Posterior cingulate gyrus (tissue), 11 donors: ENCODE measurements at regions of chr5 and their contacts with region 1.

Region 1: GRCh38 chr5:170225326-170226128 is 7.3 kb upstream of the C5orf58 start:
- DNase-seq: peak; percentile 55 to 95 (median 84)

Region 2: DNA sequence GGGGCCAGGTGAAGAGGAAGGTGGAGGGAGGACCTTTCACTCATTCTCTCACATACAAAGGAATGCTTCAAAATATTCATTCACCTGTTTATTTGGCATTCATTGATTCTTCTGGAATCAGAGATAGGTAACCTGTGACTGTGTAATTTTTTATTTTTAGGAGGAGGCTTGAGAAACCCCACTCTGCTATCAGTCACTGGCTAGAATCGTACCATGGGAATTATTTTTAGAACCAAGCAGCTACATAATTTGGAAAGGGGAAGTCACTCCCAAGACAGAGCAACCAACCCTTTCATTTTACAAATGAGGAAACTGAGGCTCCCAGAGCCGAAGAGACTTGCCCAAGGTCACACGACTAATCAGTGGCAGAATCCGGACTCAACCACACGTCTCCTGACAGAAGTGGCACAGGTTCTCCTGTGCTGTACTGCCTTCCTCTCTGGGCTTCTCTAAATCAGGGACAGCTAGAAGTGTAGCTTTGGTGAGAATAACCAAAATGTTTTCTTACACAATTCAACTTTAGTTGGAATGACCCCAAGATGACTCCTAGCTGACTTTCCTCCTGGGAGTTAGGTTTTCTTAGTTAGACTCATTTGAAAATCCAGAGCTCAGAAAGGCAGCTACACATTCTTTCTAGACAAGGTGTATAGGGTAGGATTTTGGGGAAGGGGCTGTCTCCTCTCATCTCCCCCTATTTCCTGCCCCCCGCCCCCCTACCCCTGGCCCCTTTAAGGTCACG is 1382.1 kb before region 1 on chr5:
- intact Hi-C with region 1: no loop called
- DNase-seq: peak in 1 of 10 donors; percentile 8

Region 3: DNA sequence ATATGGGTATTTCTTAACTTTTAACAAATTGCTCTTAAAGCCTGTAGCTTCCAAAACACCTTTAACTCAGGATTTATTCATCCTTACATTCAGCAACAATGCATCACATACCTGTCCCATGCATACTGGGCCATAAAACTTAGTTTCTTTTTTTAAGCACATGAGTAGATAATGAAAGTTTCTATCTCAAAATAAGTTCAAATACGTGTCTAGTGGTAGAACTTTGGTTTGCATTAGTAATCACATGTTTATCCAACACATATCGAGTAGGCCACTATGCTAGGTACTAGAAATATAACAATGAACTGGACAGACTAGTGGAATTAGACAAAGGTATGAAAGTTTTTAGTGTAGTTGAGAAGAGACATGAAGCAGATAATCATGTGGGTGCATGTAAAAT is 488.9 kb before region 1 on chr5:
- intact Hi-C with region 1: no loop called
- DNase-seq: no peak

Region 4: DNA sequence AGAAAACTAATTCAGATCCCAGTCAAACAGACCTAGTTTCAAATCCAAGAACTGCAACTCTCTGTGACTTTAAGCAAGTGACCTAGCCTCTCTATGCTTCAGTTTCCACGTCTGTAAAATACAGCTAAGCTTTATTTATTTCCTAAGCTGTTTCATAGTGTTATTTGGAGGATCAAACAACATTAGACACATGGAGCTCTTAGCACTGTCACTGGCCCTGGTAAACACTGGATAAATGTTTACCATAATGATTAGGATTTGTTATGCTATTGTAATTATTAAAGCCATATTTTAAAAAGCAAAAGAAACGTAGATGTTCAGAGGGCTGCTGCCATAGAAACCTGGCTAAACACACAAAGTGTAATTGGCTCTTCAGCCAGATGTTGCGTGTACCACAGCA is 19.3 kb before region 1 on chr5:
- intact Hi-C with region 1: no loop called
- DNase-seq: no peak

Region 5: GRCh38 chr5:170348137-170348633 is 122.7 kb after region 1 on chr5:
- intact Hi-C with region 1: loop called (anchors 2 kb)
- DNase-seq: no peak

Region 6: DNA sequence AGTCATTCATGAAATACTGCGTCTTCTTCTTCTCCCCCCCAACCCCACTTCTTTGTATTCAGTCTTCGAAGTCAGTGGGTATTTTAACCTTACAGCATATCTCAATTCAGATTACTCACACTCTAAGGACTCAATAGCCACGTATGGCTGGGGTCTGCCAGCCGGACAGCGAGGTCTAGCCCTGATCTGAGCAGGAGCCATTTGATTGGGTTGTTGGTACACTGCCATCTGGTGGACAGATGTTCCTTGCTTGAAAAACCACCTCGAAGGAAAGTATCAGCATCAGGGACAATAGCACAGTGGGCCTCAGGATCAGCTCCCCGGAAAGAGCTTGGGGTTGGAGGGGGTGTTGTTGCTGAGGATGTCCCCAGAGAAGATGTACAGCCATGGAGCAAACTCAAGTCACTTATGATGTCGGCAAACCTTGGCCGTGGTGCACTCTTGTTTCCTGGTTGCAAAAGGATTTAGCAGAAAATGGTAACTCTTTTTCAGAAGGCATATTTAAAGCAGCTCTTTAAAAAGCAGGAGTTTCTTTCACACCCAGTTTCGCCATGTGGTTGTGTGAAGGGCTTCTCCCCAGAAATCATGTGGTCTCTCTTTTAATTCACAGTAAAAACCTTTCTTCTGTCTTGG is 195.4 kb after region 1 on chr5:
- intact Hi-C with region 1: loop called (anchors 1 kb)
- DNase-seq: peak in 4 of 10 donors; percentile 47 to 64 (median 52)

Region 7: DNA sequence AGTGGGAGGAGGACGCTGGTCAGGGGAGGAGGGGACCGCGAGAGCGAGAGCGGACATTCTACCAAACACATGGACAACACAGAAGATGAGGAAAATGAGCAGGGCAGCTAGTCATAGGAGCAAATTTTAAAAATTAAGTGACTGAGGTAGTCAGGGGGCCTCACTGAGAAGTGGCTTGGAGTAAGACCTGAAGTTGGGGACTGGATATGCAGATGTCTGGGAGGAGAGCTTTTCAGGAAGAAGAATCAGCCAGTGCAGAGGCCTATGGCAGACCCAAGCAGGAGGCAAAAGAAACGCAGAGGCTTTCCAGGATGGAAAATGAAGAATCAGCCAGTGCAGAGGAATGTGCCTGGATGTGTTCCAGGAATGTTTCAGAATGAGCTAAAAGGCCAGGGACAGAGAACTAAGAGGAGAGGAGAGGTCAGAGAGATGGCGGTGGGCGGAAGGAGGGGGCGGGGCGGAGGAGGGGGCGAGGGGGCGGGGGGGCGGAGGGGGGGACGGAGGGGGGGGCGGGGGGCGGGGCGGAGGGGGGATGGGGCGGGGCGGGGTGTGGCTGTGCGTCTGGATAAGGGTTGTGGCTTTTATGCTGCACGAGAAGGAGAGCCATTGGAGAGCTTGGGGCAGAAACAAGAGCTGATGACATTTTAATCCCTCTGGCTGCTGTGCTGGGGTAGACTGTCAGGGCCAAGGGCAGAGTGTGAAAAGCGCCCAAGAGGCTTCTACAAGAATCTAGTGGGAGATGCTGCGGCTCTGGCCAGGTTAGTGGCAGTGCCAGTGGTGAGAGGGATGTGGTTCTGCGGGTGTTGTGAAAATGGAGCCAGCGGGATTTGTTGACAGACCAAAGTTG is 407.9 kb after region 1 on chr5:
- intact Hi-C with region 1: loop called (anchors 5 kb)
- DNase-seq: peak in 1 of 10 donors; percentile 61